H1 (cell line): ENCODE measurements at regions of chr1 and their contacts with region 1.

Region 1: GRCh38 chr1:203463469-203464062 is 12.0 kb upstream of the PRELP start:
- DNase-seq: no peak
- H3K4me3 ChIP-seq: no peak overlapping the region
- H3K27ac ChIP-seq: no peak overlapping the region
- H3K4me1 ChIP-seq: peaks cover 0 to 10% (median 3%) of the 10 kb centered on the region in 4 experiments; a peak in 4 of 7 replicates
- H3K27me3 ChIP-seq: no peaks in the 10 kb centered on the region; a peak in 1 of 7 replicates
- CTCF ChIP-seq: peak; percentile 2 to 17 (median 16); a peak in 3 of 4 replicates
- EP300 ChIP-seq: no peak
- POLR2A ChIP-seq: no peak
- RAD21 ChIP-seq: peak; percentile 26 to 40; a peak in 3 of 4 replicates

Region 2: GRCh38 chr1:203439131-203439730 is 24.3 kb before region 1 on chr1:
- CTCF ChIA-PET with region 1: no interaction called
- POLR2A ChIA-PET with region 1: no interaction called
- DNase-seq: no peak
- H3K4me3 ChIP-seq: no peak overlapping the region
- H3K27ac ChIP-seq: no peak overlapping the region
- H3K4me1 ChIP-seq: peaks cover 2 to 9% (median 5%) of the 10 kb centered on the region in 4 experiments
- H3K27me3 ChIP-seq: no peaks in the 10 kb centered on the region; a peak in 1 of 7 replicates
- CTCF ChIP-seq: no peak
- EP300 ChIP-seq: no peak
- POLR2A ChIP-seq: no peak
- RAD21 ChIP-seq: no peak

Region 3: DNA sequence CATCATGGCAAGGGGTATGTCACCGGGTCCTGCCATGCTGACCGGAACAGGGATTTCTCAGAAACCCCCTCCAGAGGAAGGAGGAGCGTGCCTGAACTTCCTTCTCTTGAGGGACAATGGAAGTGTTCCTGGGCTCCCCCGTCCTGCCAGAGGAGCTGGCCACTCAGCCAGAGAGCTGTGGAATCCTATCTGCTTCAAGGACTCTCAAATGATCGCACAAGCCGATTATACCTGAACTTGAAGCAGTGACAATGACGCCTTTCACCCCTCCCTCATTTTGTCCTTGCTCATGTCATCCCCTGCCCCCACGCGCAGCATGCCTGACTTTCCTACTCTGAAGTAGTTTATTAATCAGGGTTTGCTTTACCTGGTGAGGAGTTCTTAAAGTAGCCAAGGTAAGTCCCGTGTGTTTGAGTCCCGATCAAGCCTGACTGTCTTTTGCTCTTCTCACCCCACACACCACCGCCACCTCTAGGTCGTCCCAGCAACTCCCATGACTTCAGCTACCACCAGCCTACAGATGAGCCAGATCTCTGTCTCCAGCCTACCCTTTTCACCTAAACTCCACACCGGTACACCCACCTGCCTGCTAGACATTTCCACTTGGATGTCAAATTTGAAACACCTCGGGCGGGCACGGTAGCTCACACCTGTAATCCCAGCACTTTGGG is 13.0 kb before region 1 on chr1:
- CTCF ChIA-PET with region 1: interaction called, 15 read pairs
- POLR2A ChIA-PET with region 1: no interaction called
- DNase-seq: no peak
- H3K4me3 ChIP-seq: no peak overlapping the region
- H3K27ac ChIP-seq: no peak overlapping the region
- H3K4me1 ChIP-seq: peaks cover 0 to 2% (median 0%) of the 10 kb centered on the region in 4 experiments; a peak in 2 of 7 replicates
- H3K27me3 ChIP-seq: no peaks in the 10 kb centered on the region
- CTCF ChIP-seq: peak; percentile 57 to 70 (median 63)
- EP300 ChIP-seq: no peak
- POLR2A ChIP-seq: no peak
- RAD21 ChIP-seq: peak; percentile 56 to 65

Region 4: DNA sequence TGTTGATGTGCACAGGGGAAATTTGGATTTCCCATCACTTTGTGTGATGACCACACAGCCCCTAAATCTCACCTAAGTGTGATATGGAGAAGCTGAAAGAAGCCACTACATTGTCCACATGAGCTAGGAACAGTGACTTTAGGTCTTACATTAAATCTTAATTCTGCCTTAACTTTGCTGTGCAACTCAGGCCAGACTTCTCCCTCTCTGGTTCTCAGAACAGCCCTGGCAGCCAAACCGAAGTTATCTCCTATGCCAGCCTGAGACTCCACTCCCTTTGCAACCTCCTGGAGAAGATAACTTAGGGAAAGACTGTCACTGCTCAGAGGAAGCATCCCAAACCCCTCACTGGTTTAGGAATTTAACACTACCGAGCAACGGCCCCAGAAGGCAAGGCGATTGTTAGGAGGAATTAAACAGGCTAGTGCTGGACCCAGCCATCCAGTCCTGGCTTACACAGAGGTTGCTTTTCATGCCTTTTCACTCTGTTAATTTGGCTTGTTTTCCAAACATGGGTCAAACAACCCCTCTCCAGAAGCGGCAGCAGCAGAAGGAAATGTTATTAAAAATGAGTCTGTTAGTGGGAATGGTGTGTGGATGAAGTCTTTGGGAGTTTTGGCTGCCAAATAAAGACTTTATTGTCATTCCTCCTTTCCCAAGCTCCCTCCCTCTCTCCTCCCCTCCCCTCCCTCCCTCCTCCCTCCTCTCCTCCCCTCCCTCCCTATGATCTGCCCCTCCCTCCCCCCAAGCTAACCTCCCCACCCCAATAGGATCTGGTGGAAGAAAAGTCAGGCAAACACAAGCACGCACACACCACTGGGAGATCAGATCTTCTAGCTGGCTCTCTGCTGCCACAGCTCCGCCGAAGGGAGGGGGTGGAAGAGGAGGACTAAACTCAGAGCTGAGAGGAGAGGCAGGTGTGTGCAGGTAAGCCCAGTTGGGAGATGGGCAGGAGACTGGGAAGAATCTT is 11.7 kb after region 1 on chr1 and contains the start of gene PRELP:
- CTCF ChIA-PET with region 1: interaction called, 29 read pairs
- POLR2A ChIA-PET with region 1: interaction called, 7 read pairs
- DNase-seq: no peak
- H3K4me3 ChIP-seq: peak within 1 kb of the TSS in 2 of 4 experiments; percentile 2 to 36; a peak in 2 of 8 replicates
- H3K27ac ChIP-seq: no peak within 1 kb of the TSS
- H3K4me1 ChIP-seq: peaks cover 2 to 16% (median 8%) of the 10 kb centered on the region in 4 experiments; a peak in 6 of 7 replicates
- H3K27me3 ChIP-seq: no peaks in the 10 kb centered on the region; a peak in 1 of 7 replicates
- CTCF ChIP-seq: peak; percentile 8 to 16 (median 15); a peak in 2 of 4 replicates
- EP300 ChIP-seq: no peak
- POLR2A ChIP-seq: no peak
- RAD21 ChIP-seq: peak; percentile 29 to 38; a peak in 2 of 4 replicates
- total RNA-seq, gene PRELP: 0.13 and 0.19 TPM in 2 replicates

Region 5: GRCh38 chr1:203534012-203534411 is 70.4 kb after region 1 on chr1:
- CTCF ChIA-PET with region 1: no interaction called
- POLR2A ChIA-PET with region 1: no interaction called
- DNase-seq: no peak
- H3K4me3 ChIP-seq: no peak overlapping the region
- H3K27ac ChIP-seq: no peak overlapping the region
- H3K4me1 ChIP-seq: no peaks in the 10 kb centered on the region
- H3K27me3 ChIP-seq: no peaks in the 10 kb centered on the region
- CTCF ChIP-seq: no peak
- EP300 ChIP-seq: no peak
- POLR2A ChIP-seq: no peak
- RAD21 ChIP-seq: no peak